CD4-positive, alpha-beta T cell (primary cell): ENCODE measurements at regions of chr2 and their contacts with region 1.

Region 1: GRCh38 chr2:216034065-216034464 is 20.7 kb upstream of the MREG start:
- DNase-seq: peak; percentile 64 to 85 (median 75)
- ATAC-seq: peak; percentile 93
- H3K4me3 ChIP-seq: no peak overlapping the region
- H3K4me3 Mint-ChIP-seq: no peak overlapping the region
- H3K27ac ChIP-seq: no peak overlapping the region
- H3K27ac Mint-ChIP-seq: no peak overlapping the region
- H3K4me1 ChIP-seq: peaks cover 5% of the 10 kb centered on the region
- H3K4me1 Mint-ChIP-seq: peaks cover 23% of the 10 kb centered on the region
- H3K27me3 ChIP-seq: no peaks in the 10 kb centered on the region
- H3K27me3 Mint-ChIP-seq: no peaks in the 10 kb centered on the region
- CTCF ChIP-seq: peak; percentile 92

Region 2: GRCh38 chr2:215817046-215817445 is 217.0 kb before region 1 on chr2:
- CTCF ChIA-PET with region 1: no interaction called
- POLR2A ChIA-PET with region 1: no interaction called
- intact Hi-C with region 1: no loop called
- DNase-seq: no peak
- ATAC-seq: no peak
- H3K4me3 ChIP-seq: no peak overlapping the region
- H3K4me3 Mint-ChIP-seq: no peak overlapping the region
- H3K27ac ChIP-seq: no peak overlapping the region
- H3K27ac Mint-ChIP-seq: no peak overlapping the region
- H3K4me1 ChIP-seq: peaks cover under 1% of the 10 kb centered on the region
- H3K4me1 Mint-ChIP-seq: peaks cover 3% of the 10 kb centered on the region
- H3K27me3 ChIP-seq: peaks cover 2 to 6% of the 10 kb centered on the region in 2 experiments
- H3K27me3 Mint-ChIP-seq: peaks cover 12% of the 10 kb centered on the region
- CTCF ChIP-seq: no peak

Region 3: GRCh38 chr2:216013080-216013909 is 20.8 kb before region 1 on chr2 and contains the start of gene MREG:
- CTCF ChIA-PET with region 1: interaction called, 10 read pairs
- POLR2A ChIA-PET with region 1: interaction called, 3 read pairs
- intact Hi-C with region 1: no loop called
- DNase-seq: peak; percentile 66 to 92 (median 78)
- ATAC-seq: peak; percentile 77
- H3K4me3 ChIP-seq: peak within 1 kb of the TSS; percentile 77
- H3K4me3 Mint-ChIP-seq: peak within 1 kb of the TSS; percentile 89
- H3K27ac ChIP-seq: no peak within 1 kb of the TSS
- H3K27ac Mint-ChIP-seq: peak within 1 kb of the TSS; percentile 45
- H3K4me1 ChIP-seq: peaks cover 33% of the 10 kb centered on the region
- H3K4me1 Mint-ChIP-seq: peaks cover 53% of the 10 kb centered on the region
- H3K27me3 ChIP-seq: no peaks in the 10 kb centered on the region
- H3K27me3 Mint-ChIP-seq: no peaks in the 10 kb centered on the region
- CTCF ChIP-seq: peak; percentile 76
- total RNA-seq, gene MREG: 1.8 to 2.8 TPM

Region 4: GRCh38 chr2:216114714-216115557 is 80.9 kb after region 1 on chr2:
- CTCF ChIA-PET with region 1: interaction called, 4 read pairs
- POLR2A ChIA-PET with region 1: interaction called, 7 read pairs
- intact Hi-C with region 1: loop called in 1 of 2 experiments (anchors 2 kb)
- DNase-seq: peak; percentile 94 to 99 (median 97)
- ATAC-seq: peak; percentile 93
- H3K4me3 ChIP-seq: peak overlapping the region; percentile 65
- H3K4me3 Mint-ChIP-seq: peak overlapping the region; percentile 90
- H3K27ac ChIP-seq: peak overlapping the region; percentile 69 to 78
- H3K27ac Mint-ChIP-seq: peak overlapping the region; percentile 90
- H3K4me1 ChIP-seq: peaks cover 42% of the 10 kb centered on the region
- H3K4me1 Mint-ChIP-seq: peaks cover 95% of the 10 kb centered on the region
- H3K27me3 ChIP-seq: no peaks in the 10 kb centered on the region
- H3K27me3 Mint-ChIP-seq: no peaks in the 10 kb centered on the region
- CTCF ChIP-seq: peak; percentile 92

Region 5: GRCh38 chr2:216139884-216140283 is 105.8 kb after region 1 on chr2:
- CTCF ChIA-PET with region 1: no interaction called
- POLR2A ChIA-PET with region 1: no interaction called
- intact Hi-C with region 1: loop called (anchors 1 to 5 kb)
- DNase-seq: peak in 10 of 14 experiments; percentile 8 to 69 (median 28)
- ATAC-seq: peak; percentile 81
- H3K4me3 ChIP-seq: no peak overlapping the region
- H3K4me3 Mint-ChIP-seq: no peak overlapping the region
- H3K27ac ChIP-seq: no peak overlapping the region
- H3K27ac Mint-ChIP-seq: peak overlapping the region; percentile 22
- H3K4me1 ChIP-seq: no peaks in the 10 kb centered on the region
- H3K4me1 Mint-ChIP-seq: peaks cover 24% of the 10 kb centered on the region
- H3K27me3 ChIP-seq: no peaks in the 10 kb centered on the region
- H3K27me3 Mint-ChIP-seq: no peaks in the 10 kb centered on the region
- CTCF ChIP-seq: peak; percentile 46

Region 6: GRCh38 chr2:216498418-216499413 is 464.7 kb after region 1 on chr2 and contains the start of gene RPL37A:
- CTCF ChIA-PET with region 1: no interaction called
- POLR2A ChIA-PET with region 1: no interaction called
- intact Hi-C with region 1: loop called in 1 of 2 experiments (anchors 10 kb)
- DNase-seq: peak; percentile 79 to 96 (median 86)
- ATAC-seq: peak; percentile 92
- H3K4me3 ChIP-seq: peak within 1 kb of the TSS; percentile 72
- H3K4me3 Mint-ChIP-seq: peak within 1 kb of the TSS; percentile 97
- H3K27ac ChIP-seq: peak within 1 kb of the TSS; percentile 77 to 82
- H3K27ac Mint-ChIP-seq: peak within 1 kb of the TSS; percentile 94
- H3K4me1 ChIP-seq: peaks cover 27% of the 10 kb centered on the region
- H3K4me1 Mint-ChIP-seq: peaks cover 54% of the 10 kb centered on the region
- H3K27me3 ChIP-seq: no peaks in the 10 kb centered on the region
- H3K27me3 Mint-ChIP-seq: no peaks in the 10 kb centered on the region
- CTCF ChIP-seq: no peak
- total RNA-seq, gene RPL37A: 4,138 to 4,142 TPM

Region 7: DNA sequence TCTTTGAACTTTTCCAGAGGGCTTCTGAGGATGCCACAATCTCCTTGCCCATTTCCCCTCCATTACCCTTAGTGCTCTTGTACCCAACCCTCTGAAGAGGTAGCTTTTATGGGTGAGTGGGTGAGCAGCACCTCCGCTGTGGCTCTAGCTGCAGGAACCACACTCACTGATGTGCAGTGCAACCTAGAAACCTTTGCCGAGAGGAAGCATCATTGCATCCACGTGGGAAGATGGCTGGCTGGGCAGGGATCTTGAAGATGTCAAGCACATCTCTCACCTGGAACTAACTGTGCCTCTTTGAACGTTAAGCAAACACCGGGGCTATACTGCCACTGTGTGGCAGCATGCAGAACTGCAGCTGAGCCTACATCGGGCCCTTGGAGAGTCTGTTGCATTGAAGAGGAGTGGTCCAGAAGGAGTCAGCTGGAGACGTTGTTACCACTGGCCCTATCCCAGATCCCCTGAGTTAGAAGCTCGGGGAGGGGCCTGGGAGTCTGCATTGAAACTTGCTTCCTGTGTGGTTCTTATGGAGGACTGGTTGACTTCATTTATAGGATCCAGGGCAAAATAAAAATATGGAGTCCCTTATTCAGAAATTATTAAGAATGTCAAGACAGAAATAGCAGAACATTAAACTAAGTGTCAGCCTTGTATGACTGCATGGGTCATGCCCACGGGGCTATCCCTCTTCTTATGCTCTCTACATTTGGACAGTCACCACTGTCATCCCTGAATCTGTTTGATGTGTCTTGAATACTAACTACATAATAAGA is 632.6 kb after region 1 on chr2:
- CTCF ChIA-PET with region 1: interaction called, 6 read pairs
- POLR2A ChIA-PET with region 1: no interaction called
- intact Hi-C with region 1: loop called (anchors 1 kb)
- DNase-seq: peak; percentile 34 to 79 (median 58)
- ATAC-seq: peak; percentile 90
- H3K4me3 ChIP-seq: no peak overlapping the region
- H3K4me3 Mint-ChIP-seq: no peak overlapping the region
- H3K27ac ChIP-seq: no peak overlapping the region
- H3K27ac Mint-ChIP-seq: no peak overlapping the region
- H3K4me1 ChIP-seq: no peaks in the 10 kb centered on the region
- H3K4me1 Mint-ChIP-seq: no peaks in the 10 kb centered on the region
- H3K27me3 ChIP-seq: peaks cover 0 to 5% of the 10 kb centered on the region in 2 experiments
- H3K27me3 Mint-ChIP-seq: no peaks in the 10 kb centered on the region
- CTCF ChIP-seq: peak; percentile 93